Activated CD4-positive, alpha-beta T cell treated with anti-CD3 and anti-CD28 coated beads, Interleukin-2, amount 10 ng/mL, durations not matched to agents 24 days and 14 days (primary cell): ENCODE measurements at regions of chr2 and their contacts with region 1.

Region 1: DNA sequence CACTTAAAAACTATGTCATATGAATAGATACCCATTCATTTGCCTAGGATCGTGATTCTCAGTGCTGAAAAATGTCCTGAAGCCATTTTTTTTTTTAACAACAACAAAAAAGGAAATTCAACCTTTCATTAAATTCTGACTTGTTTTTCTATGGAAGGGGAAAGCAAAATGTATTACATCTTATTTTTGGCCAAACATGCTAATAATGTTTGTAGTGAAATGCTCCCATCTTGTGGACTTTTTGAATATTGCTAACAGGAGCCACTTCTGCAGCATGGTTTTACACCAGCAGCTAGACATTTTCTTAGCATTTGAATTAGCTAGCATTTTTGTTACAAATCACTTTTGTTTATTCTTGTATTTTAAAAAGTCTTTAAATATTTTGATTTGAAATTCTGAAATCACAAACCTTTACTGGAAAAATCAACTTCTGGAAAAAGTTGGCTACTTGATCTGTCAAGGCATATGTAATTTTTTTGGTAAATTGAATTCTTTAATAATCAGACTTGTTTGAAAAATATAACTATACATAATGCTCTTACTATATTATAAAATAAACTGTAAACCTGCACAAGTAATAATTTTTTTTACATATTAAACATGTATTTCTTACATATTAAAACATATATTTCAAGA is 75.8 kb downstream of the KIDINS220 start:
- DNase-seq: no peak
- H3K4me3 Mint-ChIP-seq: no peak overlapping the region
- H3K27ac Mint-ChIP-seq: no peak overlapping the region
- H3K4me1 Mint-ChIP-seq: no peaks in the 10 kb centered on the region
- H3K27me3 Mint-ChIP-seq: no peaks in the 10 kb centered on the region

Region 2: DNA sequence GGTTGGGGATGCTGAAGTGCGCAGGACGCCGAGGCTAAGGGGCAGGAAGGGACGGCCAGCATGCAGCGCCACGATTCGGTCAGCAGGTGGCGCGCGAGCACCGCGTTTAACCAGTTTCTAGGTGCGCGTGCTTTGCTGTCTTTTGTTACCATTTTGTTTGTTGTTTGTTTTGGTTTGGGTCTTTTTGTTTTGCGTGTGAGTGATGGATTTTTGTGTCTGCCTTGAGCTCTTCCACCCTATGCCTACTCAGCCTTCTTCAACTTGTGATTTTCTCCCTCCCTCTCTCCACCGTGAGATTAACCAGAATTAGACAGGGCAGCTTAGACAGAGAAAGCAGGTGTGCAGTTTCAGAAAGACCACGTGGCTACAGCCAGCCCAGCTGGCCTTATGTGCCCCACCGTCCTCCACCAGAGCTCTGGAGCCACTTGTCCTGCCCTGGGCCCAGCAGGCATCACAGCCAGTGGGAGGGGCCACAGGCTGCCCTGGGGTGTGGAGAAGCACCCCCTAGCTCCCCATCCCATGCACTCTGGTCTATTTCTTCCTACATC is 1664.2 kb before region 1 on chr2:
- intact Hi-C with region 1: loop called (anchors 1 kb)
- DNase-seq: peak; percentile 93
- H3K4me3 Mint-ChIP-seq: peak overlapping the region; percentile 64
- H3K27ac Mint-ChIP-seq: no peak overlapping the region
- H3K4me1 Mint-ChIP-seq: peaks cover 7% of the 10 kb centered on the region
- H3K27me3 Mint-ChIP-seq: no peaks in the 10 kb centered on the region

Region 3: GRCh38 chr2:7203055-7203467 is 1558.6 kb before region 1 on chr2:
- intact Hi-C with region 1: loop called (anchors 1 kb)
- DNase-seq: peak; percentile 88
- H3K4me3 Mint-ChIP-seq: no peak overlapping the region
- H3K27ac Mint-ChIP-seq: no peak overlapping the region
- H3K4me1 Mint-ChIP-seq: peaks cover 3% of the 10 kb centered on the region
- H3K27me3 Mint-ChIP-seq: peaks cover 2% of the 10 kb centered on the region

Region 4: GRCh38 chr2:8693155-8693821 is 68.4 kb before region 1 on chr2:
- intact Hi-C with region 1: loop called (anchors 2 kb)
- DNase-seq: peak; percentile 82
- H3K4me3 Mint-ChIP-seq: peak overlapping the region; percentile 64
- H3K27ac Mint-ChIP-seq: no peak overlapping the region
- H3K4me1 Mint-ChIP-seq: peaks cover 3% of the 10 kb centered on the region
- H3K27me3 Mint-ChIP-seq: peaks cover 27% of the 10 kb centered on the region